CD8-positive, alpha-beta T cell (primary cell): ENCODE measurements at regions of chr11 and their contacts with region 1.

Region 1: GRCh38 chr11:75525596-75526541 is at the start of gene GDPD5:
- DNase-seq: peak; percentile 63 to 93 (median 84)
- ATAC-seq: peak; percentile 97
- H3K4me3 ChIP-seq: peak within 1 kb of the TSS; percentile 66 to 78
- H3K4me3 Mint-ChIP-seq: peak within 1 kb of the TSS; percentile 89
- H3K27ac ChIP-seq: no peak within 1 kb of the TSS
- H3K27ac Mint-ChIP-seq: peak within 1 kb of the TSS; percentile 46
- H3K4me1 ChIP-seq: peaks cover 12% of the 10 kb centered on the region
- H3K4me1 Mint-ChIP-seq: peaks cover 26% of the 10 kb centered on the region
- H3K27me3 ChIP-seq: peaks cover 0 to 4% of the 10 kb centered on the region in 2 experiments
- H3K27me3 Mint-ChIP-seq: no peaks in the 10 kb centered on the region
- CTCF ChIP-seq: peak; percentile 39
- total RNA-seq, gene GDPD5: 15.9 to 18.3 TPM

Region 2: GRCh38 chr11:75399344-75400145 is 126.3 kb before region 1 on chr11 and contains the start of gene RPS3:
- CTCF ChIA-PET with region 1: interaction called, 5 read pairs
- POLR2A ChIA-PET with region 1: interaction called, 3 read pairs
- intact Hi-C with region 1: loop called (anchors 2 kb)
- DNase-seq: peak; percentile 72 to 93 (median 88)
- ATAC-seq: peak; percentile 88
- H3K4me3 ChIP-seq: peak within 1 kb of the TSS; percentile 69 to 76
- H3K4me3 Mint-ChIP-seq: peak within 1 kb of the TSS; percentile 95
- H3K27ac ChIP-seq: peak within 1 kb of the TSS; percentile 88 to 89
- H3K27ac Mint-ChIP-seq: peak within 1 kb of the TSS; percentile 95
- H3K4me1 ChIP-seq: peaks cover 28% of the 10 kb centered on the region
- H3K4me1 Mint-ChIP-seq: peaks cover 48% of the 10 kb centered on the region
- H3K27me3 ChIP-seq: no peaks in the 10 kb centered on the region
- H3K27me3 Mint-ChIP-seq: no peaks in the 10 kb centered on the region
- CTCF ChIP-seq: no peak
- total RNA-seq, gene RPS3: 4,683 to 5,039 TPM

Region 3: GRCh38 chr11:75474878-75475766 is 50.7 kb before region 1 on chr11:
- CTCF ChIA-PET with region 1: interaction called, 4 read pairs
- POLR2A ChIA-PET with region 1: interaction called, 5 read pairs
- intact Hi-C with region 1: loop called (anchors 2 to 5 kb)
- DNase-seq: peak; percentile 35 to 84 (median 72)
- ATAC-seq: peak; percentile 93
- H3K4me3 ChIP-seq: peak overlapping the region; percentile 4 to 20
- H3K4me3 Mint-ChIP-seq: peak overlapping the region; percentile 70
- H3K27ac ChIP-seq: peak overlapping the region; percentile 46 to 75
- H3K27ac Mint-ChIP-seq: peak overlapping the region; percentile 91
- H3K4me1 ChIP-seq: peaks cover 18% of the 10 kb centered on the region
- H3K4me1 Mint-ChIP-seq: peaks cover 19% of the 10 kb centered on the region
- H3K27me3 ChIP-seq: no peaks in the 10 kb centered on the region
- H3K27me3 Mint-ChIP-seq: no peaks in the 10 kb centered on the region
- CTCF ChIP-seq: no peak

Region 4: GRCh38 chr11:75492181-75492820 is 33.6 kb before region 1 on chr11:
- CTCF ChIA-PET with region 1: no interaction called
- POLR2A ChIA-PET with region 1: no interaction called
- intact Hi-C with region 1: loop called in 1 of 2 experiments (anchors 5 kb)
- DNase-seq: peak; percentile 9 to 79 (median 65)
- ATAC-seq: peak; percentile 94
- H3K4me3 ChIP-seq: peak overlapping the region in 1 of 2 experiments; percentile 52
- H3K4me3 Mint-ChIP-seq: peak overlapping the region; percentile 50
- H3K27ac ChIP-seq: peak overlapping the region in 1 of 2 experiments; percentile 50
- H3K27ac Mint-ChIP-seq: peak overlapping the region; percentile 62
- H3K4me1 ChIP-seq: peaks cover 13% of the 10 kb centered on the region
- H3K4me1 Mint-ChIP-seq: peaks cover 14% of the 10 kb centered on the region
- H3K27me3 ChIP-seq: no peaks in the 10 kb centered on the region
- H3K27me3 Mint-ChIP-seq: no peaks in the 10 kb centered on the region
- CTCF ChIP-seq: no peak

Region 5: DNA sequence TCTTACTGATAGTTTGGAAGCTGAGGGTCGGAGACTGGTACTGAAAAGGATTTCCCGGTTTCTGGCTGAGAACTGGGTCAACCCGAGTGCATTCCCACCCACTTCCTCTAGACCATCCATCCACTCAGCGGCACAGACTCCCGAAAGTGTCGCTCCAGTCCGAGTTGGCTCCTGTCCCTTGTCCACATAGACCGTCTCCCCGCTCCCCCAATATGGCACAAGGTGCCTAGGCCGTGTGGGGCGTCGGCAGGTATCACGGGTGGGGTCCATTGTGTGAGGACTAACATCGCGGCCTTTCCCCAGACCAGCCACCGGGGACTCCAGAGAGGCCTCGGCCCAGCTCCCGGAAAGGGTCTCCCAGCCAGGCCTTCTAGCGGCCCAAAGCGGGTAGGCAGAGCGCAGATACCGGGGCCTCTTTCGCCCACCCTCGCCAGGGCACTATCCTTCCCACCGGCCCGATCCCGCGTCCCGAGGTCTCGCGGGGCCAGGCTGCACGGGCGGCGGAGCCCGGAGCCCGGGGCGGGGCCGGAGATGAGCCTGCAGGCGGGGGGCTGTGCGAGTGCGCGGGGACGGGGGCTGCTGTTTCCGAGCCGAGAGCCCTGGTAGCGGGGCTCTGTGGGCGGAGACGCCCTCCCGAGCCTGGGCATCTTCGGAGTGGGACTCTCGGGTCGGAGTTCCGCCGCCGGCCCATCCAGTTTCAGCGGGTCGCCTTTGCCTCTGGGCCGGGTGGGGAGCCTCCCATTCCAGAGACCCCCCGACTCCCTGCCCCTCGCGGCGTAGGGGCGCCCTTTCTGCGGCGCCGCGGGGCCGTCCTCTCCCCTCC is 57.2 kb after region 1 on chr11:
- CTCF ChIA-PET with region 1: interaction called, 3 read pairs
- POLR2A ChIA-PET with region 1: interaction called, 3 read pairs
- intact Hi-C with region 1: loop called in 1 of 2 experiments (anchors 5 kb)
- DNase-seq: peak in 8 of 9 experiments; percentile 7 to 81 (median 62)
- ATAC-seq: peak; percentile 95
- H3K4me3 ChIP-seq: peak overlapping the region; percentile 66 to 73
- H3K4me3 Mint-ChIP-seq: peak overlapping the region; percentile 87
- H3K27ac ChIP-seq: peak overlapping the region; percentile 53 to 68
- H3K27ac Mint-ChIP-seq: peak overlapping the region; percentile 84
- H3K4me1 ChIP-seq: peaks cover 9% of the 10 kb centered on the region
- H3K4me1 Mint-ChIP-seq: peaks cover 20% of the 10 kb centered on the region
- H3K27me3 ChIP-seq: no peaks in the 10 kb centered on the region
- H3K27me3 Mint-ChIP-seq: no peaks in the 10 kb centered on the region
- CTCF ChIP-seq: no peak

Region 6: DNA sequence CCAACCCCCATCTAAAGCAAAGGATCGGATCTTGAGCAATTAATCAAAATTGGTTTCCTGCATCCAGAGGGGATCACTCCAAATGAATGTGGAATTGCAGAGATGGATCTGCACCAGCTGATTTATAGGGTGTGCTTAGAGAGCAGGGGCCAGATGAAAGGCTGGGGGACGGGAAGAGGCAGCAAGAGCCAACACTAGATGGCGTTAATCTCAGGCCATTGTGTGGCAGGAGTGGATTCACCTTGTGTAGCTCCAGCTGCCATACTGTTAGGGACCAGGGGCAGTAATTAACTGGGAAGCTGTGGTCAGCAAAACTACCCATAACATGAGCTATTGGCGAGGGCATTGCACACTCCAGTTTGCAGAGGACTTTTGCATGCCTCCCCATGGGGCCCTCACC is 71.8 kb after region 1 on chr11:
- CTCF ChIA-PET with region 1: no interaction called
- POLR2A ChIA-PET with region 1: no interaction called
- intact Hi-C with region 1: no loop called
- DNase-seq: no peak
- ATAC-seq: no peak
- H3K4me3 ChIP-seq: no peak overlapping the region
- H3K4me3 Mint-ChIP-seq: no peak overlapping the region
- H3K27ac ChIP-seq: no peak overlapping the region
- H3K27ac Mint-ChIP-seq: no peak overlapping the region
- H3K4me1 ChIP-seq: no peaks in the 10 kb centered on the region
- H3K4me1 Mint-ChIP-seq: peaks cover 4% of the 10 kb centered on the region
- H3K27me3 ChIP-seq: no peaks in the 10 kb centered on the region
- H3K27me3 Mint-ChIP-seq: no peaks in the 10 kb centered on the region
- CTCF ChIP-seq: no peak